Mammary epithelial cell (primary cell): ENCODE measurements at regions of chr17 and their contacts with region 1.

Region 1: DNA sequence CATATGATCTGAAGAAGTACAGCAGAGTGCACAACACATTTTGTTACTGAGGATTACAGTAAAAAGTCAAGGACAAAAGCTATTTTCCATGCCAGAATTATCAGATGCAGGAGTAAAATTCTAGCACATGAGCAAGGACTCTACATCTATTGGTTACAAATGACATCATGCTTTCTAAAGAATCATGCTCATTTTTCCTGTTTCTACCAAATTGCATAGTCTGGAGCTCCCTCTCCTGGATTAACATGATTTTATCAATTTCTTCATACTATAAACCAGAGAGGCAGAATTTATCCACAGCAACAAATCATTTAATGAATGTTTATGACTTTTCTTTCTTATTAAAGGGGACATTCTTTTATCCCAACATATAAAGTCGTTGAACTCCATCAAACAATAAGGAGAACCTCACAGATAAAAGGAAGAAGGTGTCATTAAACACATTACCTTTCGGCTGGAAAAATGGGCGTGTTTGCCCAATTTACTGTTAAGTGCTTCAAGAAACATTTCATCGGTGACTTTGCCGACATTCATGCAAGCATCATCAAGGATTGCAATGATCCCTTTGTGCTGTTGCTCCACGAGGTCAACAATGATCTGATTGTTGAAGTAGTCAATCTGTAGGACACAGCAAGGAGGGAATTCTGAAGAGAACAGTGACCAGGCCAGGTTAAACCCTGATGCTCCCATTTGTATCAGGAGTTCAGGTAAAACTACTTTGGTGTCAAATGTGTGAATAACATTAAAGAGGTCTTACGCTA is 121.7 kb downstream of the MYO1D start:
- DNase-seq: peak; percentile 51
- H3K4me3 ChIP-seq: no peak overlapping the region
- H3K27ac ChIP-seq: no peak overlapping the region
- H3K4me1 ChIP-seq: no peaks in the 10 kb centered on the region
- H3K27me3 ChIP-seq: no peaks in the 10 kb centered on the region
- CTCF ChIP-seq: peak; percentile 28 to 36

Region 2: DNA sequence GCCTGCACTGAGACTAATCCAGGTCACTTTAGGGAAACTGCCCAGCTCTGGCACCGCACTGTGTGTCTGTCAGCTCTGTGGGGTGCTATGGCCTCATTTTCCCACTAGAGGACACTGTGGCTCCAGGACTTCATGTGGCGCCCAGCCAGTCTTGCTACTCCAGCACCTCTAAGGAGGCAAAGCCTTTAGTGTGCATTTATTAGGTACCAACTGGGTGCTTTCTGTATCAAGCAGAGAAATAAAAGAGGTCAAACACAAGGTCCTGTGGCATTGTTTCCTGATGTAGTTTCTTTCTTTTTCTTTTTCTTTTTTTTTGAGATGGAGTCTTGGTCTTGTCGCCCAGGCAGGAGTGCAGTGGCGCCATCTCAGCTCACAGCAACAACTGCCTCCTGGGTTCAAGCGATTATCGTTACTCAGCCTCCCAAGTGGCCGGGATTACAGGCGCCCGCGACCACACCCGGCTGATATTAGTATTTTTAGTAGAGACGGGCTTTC is 502.1 kb before region 1 on chr17:
- CTCF ChIA-PET with region 1: no interaction called
- dilution Hi-C with region 1: no loop called
- in situ Hi-C with region 1: no loop called
- intact Hi-C with region 1: loop called (anchors 5 kb)
- DNase-seq: peak; percentile 61
- H3K4me3 ChIP-seq: no peak overlapping the region
- H3K27ac ChIP-seq: no peak overlapping the region
- H3K4me1 ChIP-seq: no peaks in the 10 kb centered on the region
- H3K27me3 ChIP-seq: peaks cover 2% of the 10 kb centered on the region
- CTCF ChIP-seq: peak; percentile 100

Region 3: DNA sequence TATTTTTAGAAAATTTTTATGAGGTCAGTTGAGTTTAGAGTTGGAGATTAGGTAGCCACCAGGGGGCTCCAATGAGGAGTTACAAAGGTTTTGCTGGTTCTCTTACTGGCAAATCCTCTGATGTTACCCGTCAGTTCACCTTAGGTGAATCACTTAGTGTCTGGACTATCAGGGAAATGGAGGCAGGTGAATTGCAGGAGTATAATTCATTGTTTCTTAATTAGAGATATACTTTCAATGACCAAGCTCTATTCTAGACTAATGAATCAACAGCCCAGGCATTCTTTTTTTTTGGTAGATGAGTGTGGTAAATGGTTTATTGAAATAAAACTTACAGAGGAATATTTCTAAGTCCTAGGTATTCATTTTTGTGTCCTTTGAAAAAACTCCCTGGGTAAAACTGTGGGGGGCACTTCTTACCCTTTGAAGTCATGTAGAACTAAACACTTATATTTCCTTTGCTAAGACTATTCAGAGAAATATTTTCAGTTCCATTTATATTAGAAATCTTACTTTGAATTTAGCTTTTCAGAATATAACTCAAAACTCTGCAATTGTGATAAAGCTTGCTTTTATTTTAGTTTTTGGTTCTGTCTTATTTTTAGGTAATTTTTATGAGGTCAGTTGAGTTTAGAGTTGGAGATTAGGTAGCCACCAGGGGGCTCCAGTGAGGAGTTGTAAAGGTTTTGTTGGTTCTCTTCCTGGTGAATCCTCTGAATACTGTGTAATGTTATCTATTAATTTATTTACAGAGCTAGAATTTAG is 293.2 kb before region 1 on chr17:
- CTCF ChIA-PET with region 1: no interaction called
- dilution Hi-C with region 1: no loop called
- in situ Hi-C with region 1: no loop called
- intact Hi-C with region 1: loop called (anchors 1 kb)
- DNase-seq: peak; percentile 62
- H3K4me3 ChIP-seq: no peak overlapping the region
- H3K27ac ChIP-seq: no peak overlapping the region
- H3K4me1 ChIP-seq: no peaks in the 10 kb centered on the region
- H3K27me3 ChIP-seq: no peaks in the 10 kb centered on the region
- CTCF ChIP-seq: peak; percentile 66 to 71

Region 4: DNA sequence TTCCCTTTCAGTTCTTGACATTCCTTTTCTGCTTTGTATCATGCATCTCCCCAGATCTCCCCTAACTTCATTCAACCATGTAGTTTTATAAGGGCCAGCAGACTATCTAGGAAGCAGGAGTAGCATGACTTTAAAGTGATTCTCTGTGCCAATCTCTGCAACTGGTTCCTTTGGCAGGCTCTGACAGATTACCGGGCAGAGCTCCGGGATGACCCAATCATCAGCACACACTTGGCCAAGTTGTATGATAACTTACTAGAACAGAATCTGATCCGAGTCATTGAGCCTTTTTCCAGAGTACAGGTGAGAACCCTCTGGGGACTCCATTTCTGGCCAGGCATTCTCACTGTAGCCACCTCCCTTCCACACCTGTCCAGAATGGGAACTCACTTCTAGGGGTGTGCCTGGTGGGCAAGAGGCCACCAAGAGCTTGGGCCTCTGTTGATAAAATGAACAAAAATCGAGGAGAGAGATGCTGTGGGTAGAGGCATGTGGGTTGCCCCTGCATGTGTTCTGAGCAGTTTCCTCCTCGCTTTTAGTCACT is 276.1 kb before region 1 on chr17:
- CTCF ChIA-PET with region 1: no interaction called
- dilution Hi-C with region 1: no loop called
- in situ Hi-C with region 1: loop called in 1 of 2 experiments (anchors 5 kb)
- intact Hi-C with region 1: loop called (anchors 1 kb)
- DNase-seq: no peak
- H3K4me3 ChIP-seq: no peak overlapping the region
- H3K27ac ChIP-seq: no peak overlapping the region
- H3K4me1 ChIP-seq: no peaks in the 10 kb centered on the region
- H3K27me3 ChIP-seq: no peaks in the 10 kb centered on the region
- CTCF ChIP-seq: no peak

Region 5: DNA sequence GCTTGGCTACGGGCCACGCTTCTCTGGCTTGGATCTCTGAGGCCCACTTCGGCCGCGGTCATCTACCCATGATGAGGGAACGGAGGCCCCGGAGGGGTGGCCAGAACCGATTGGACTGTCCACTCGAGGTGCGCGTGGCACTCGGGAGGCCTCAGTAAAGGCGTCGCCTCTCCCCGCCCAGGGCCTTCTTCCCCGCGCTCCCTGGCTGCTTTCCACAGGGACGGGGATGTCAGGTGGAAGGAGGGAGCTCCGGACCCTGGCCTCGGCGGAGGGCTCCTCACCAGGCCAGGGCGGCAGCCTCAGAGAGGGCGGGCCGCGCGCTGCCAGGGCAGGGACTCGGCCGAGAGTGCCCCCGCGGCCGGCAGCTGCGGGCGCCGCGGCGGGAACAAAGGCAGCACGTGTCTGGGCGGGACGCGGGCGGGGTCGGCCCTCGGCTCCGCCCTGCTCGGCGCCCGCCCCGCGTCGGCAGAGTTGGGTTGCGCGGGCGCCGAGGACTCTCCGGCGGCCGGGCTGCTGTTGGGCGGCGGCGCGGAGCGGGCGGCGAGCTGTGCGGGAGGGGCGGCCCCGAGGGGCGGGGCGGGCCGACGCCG is 269.0 kb before region 1 on chr17:
- CTCF ChIA-PET with region 1: no interaction called
- dilution Hi-C with region 1: no loop called
- in situ Hi-C with region 1: no loop called
- intact Hi-C with region 1: loop called (anchors 1 kb)
- DNase-seq: peak; percentile 73
- H3K4me3 ChIP-seq: peak overlapping the region in 2 of 3 experiments; percentile 60 to 72
- H3K27ac ChIP-seq: no peak overlapping the region
- H3K4me1 ChIP-seq: peaks cover 21% of the 10 kb centered on the region
- H3K27me3 ChIP-seq: no peaks in the 10 kb centered on the region
- CTCF ChIP-seq: no peak

Region 6: GRCh38 chr17:32659419-32659842 is 95.8 kb before region 1 on chr17:
- CTCF ChIA-PET with region 1: no interaction called
- dilution Hi-C with region 1: no loop called
- in situ Hi-C with region 1: no loop called
- intact Hi-C with region 1: loop called (anchors 1 kb)
- DNase-seq: peak; percentile 40
- H3K4me3 ChIP-seq: no peak overlapping the region
- H3K27ac ChIP-seq: no peak overlapping the region
- H3K4me1 ChIP-seq: no peaks in the 10 kb centered on the region
- H3K27me3 ChIP-seq: no peaks in the 10 kb centered on the region
- CTCF ChIP-seq: peak; percentile 90 to 99

Region 7: DNA sequence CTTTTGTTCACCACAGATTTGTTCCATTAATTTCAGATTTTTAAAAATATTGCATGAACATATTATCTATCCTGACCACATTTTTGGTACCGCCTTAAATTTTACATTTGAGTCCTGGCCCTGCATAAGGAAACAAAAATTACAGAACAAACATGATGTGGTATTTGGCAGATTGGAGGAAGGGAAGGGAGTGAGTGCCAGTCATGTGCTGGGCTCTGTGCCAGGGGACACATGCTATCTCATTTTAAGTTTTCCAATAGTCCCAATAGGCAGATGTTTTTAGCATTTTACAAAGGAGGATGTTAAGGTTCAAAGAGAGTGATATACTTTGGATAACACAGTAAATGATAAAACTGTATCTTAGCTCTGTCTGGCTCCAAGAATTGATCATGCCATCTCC is 83.3 kb before region 1 on chr17:
- CTCF ChIA-PET with region 1: no interaction called
- dilution Hi-C with region 1: no loop called
- in situ Hi-C with region 1: no loop called
- intact Hi-C with region 1: no loop called
- DNase-seq: no peak
- H3K4me3 ChIP-seq: no peak overlapping the region
- H3K27ac ChIP-seq: no peak overlapping the region
- H3K4me1 ChIP-seq: no peaks in the 10 kb centered on the region
- H3K27me3 ChIP-seq: no peaks in the 10 kb centered on the region
- CTCF ChIP-seq: no peak